PC-3 (cell line): ENCODE measurements at regions of chr18 and their contacts with region 1.

Region 1: GRCh38 chr18:477565-477964 is 22.9 kb downstream of the COLEC12 start:
- DNase-seq: peak; percentile 50
- ATAC-seq: peak; percentile 60
- H3K4me3 ChIP-seq: no peak overlapping the region
- H3K27ac ChIP-seq: no peak overlapping the region
- H3K4me1 ChIP-seq: peaks cover 7% of the 10 kb centered on the region; the same call in 1 of the 2 replicates
- H3K27me3 ChIP-seq: peaks cover 18% of the 10 kb centered on the region
- CTCF ChIP-seq: peak; percentile 77

Region 2: GRCh38 chr18:286515-287310 is 190.9 kb before region 1 on chr18:
- CTCF ChIA-PET with region 1: no interaction called
- POLR2A ChIA-PET with region 1: no interaction called
- intact Hi-C with region 1: loop called (anchors 5 kb)
- DNase-seq: peak; percentile 38
- ATAC-seq: peak; percentile 61; the same call in 1 of the 2 replicates
- H3K4me3 ChIP-seq: no peak overlapping the region
- H3K27ac ChIP-seq: no peak overlapping the region
- H3K4me1 ChIP-seq: no peaks in the 10 kb centered on the region
- H3K27me3 ChIP-seq: peaks cover 13% of the 10 kb centered on the region; the same call in 1 of the 2 replicates
- CTCF ChIP-seq: peak; percentile 70

Region 3: GRCh38 chr18:323253-323622 is 154.3 kb before region 1 on chr18:
- CTCF ChIA-PET with region 1: no interaction called
- POLR2A ChIA-PET with region 1: no interaction called
- intact Hi-C with region 1: no loop called
- DNase-seq: peak; percentile 35
- ATAC-seq: peak; percentile 54
- H3K4me3 ChIP-seq: no peak overlapping the region
- H3K27ac ChIP-seq: no peak overlapping the region
- H3K4me1 ChIP-seq: 0 out of 2 replicates have a peak, but pooled peaks cover 6% of the 10 kb centered on the region
- H3K27me3 ChIP-seq: peaks cover 36% of the 10 kb centered on the region
- CTCF ChIP-seq: no peak